ENCODE measurements at regions of chr6 and their contacts with region 1.

Region 1: DNA sequence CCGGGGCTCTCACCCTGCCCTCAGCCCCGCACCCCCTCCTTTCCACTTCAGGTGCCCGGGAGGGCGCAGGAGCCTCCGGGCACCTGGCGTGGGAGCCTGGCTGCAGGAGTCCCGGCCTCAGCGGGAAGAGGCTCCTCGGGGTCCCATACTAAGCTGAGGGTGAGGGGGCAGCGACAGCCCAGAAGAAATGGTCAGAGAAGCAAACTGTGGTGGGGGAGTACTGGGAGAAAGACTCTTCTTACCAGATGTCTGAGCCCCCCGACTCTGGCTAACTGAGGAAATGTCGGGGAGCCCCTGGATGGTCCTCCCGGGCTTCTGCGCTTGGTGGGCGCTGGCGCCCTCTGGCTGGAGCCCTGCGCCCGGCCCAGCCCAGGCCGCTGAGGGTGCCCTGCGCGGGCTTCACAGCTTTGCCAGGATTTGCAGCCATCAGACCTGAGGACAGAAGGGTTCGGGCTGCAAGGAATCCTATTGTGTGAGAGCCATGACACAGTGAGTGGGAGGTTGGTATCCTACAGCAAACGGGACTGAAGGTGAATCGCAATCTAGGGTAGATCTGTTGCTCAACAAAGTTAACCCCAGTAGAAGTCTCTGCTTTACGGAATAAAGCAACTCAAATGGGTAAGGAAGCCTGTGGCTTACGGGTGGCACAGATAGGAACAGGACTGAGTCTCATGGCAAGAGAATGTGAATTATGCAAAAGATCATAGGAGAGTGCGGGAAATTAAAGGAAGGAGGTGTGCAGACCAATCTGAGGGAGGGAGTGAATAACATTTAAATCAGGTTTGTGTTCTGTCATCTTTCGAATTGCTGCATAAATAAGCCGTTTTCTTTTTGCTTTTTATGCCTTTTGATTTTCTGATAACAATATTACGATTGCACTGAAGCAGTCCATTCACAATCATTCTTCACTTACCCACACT is 639 bp upstream of the RCAN2 start:
- DNase-seq: peak; percentile 70 to 86
- ATAC-seq: peak; percentile 93
- H3K4me3 ChIP-seq: peak overlapping the region; percentile 74 to 82
- H3K27ac ChIP-seq: peak overlapping the region; percentile 63 to 73
- H3K4me1 ChIP-seq: peaks cover 0 to 4% of the 10 kb centered on the region in 2 donors
- H3K27me3 ChIP-seq: no peaks in the 10 kb centered on the region

Region 2: DNA sequence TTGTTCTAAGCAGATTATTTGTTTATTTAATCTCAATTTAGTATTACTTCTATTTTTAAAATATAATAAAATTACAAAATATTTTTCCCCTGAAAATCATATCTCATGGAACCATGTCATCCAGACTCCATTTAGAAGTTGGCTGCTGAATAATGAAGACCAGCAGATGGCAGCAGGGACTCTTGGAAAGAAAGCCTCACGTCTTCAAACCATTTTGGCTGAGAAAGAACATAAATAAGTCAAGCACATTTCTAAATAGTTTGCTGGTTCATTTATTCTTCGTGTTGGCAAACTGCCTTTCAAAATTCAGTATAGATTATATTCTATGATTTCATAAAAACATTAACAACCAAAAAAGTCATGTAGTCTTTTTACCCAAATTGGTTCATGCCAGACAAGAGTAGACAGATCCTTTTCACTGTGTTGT is 72.3 kb before region 1 on chr6:
- intact Hi-C with region 1: loop called (anchors 2 to 5 kb)
- DNase-seq: peak in 1 of 2 donors; percentile 58
- ATAC-seq: peak; percentile 78
- H3K4me3 ChIP-seq: no peak overlapping the region
- H3K27ac ChIP-seq: no peak overlapping the region
- H3K4me1 ChIP-seq: peaks cover 7 to 9% of the 10 kb centered on the region in 2 donors
- H3K27me3 ChIP-seq: no peaks in the 10 kb centered on the region

Region 3: DNA sequence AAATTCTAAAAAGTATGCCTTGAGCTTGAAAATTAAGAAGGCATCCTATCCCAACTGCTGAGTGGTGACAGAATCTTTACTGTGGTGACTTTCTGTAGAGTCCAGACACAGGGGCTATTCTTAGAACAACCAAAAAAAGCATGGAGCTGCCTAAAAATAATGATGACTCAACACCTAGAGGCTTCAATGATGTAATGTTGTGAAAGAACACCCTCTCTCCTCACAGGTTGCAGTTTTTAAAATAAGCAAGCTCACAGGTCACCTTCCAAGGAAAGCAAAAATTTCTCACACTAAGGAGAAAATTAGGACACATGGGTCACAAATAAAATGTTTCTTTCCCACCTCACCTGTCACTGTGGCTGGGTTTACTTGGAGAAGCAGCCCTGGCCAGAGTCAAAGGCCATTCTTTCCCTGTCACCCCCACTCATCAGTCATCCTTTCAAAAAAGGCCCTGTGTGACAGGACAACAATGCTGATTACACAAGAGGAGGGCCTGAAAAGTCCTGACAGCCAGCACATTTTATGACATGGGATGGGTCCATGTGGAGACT is 54.1 kb before region 1 on chr6:
- intact Hi-C with region 1: loop called in 1 of 2 experiments (anchors 5 kb)
- DNase-seq: no peak
- ATAC-seq: peak; percentile 72
- H3K4me3 ChIP-seq: no peak overlapping the region
- H3K27ac ChIP-seq: peak overlapping the region; percentile 51 to 96
- H3K4me1 ChIP-seq: peaks cover 3 to 8% of the 10 kb centered on the region in 2 donors
- H3K27me3 ChIP-seq: no peaks in the 10 kb centered on the region

Region 4: DNA sequence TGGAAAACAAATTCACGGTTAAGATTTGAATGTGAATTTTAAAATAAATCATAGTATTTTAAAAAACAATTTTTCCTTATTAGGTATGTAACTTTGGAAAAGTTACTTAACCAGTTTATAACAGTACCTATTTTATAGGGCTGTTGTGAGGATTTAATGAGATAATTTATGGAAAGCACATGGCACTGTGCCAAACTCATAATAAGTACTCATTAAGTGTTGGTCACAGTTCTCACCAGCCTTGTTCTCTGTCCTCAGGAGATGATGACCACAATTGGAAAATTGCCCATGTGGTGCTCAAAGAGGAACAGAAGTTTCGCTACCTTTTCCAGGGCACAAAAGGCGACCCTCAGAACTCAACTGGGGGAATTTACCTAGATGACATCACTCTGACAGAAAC is 340.9 kb after region 1 on chr6:
- intact Hi-C with region 1: no loop called
- DNase-seq: no peak
- ATAC-seq: no peak
- H3K4me3 ChIP-seq: no peak overlapping the region
- H3K27ac ChIP-seq: no peak overlapping the region
- H3K4me1 ChIP-seq: no peaks in the 10 kb centered on the region
- H3K27me3 ChIP-seq: no peaks in the 10 kb centered on the region